CD8-positive, alpha-beta T cell (primary cell): ENCODE measurements at regions of chr1 and their contacts with region 1.

Region 1: DNA sequence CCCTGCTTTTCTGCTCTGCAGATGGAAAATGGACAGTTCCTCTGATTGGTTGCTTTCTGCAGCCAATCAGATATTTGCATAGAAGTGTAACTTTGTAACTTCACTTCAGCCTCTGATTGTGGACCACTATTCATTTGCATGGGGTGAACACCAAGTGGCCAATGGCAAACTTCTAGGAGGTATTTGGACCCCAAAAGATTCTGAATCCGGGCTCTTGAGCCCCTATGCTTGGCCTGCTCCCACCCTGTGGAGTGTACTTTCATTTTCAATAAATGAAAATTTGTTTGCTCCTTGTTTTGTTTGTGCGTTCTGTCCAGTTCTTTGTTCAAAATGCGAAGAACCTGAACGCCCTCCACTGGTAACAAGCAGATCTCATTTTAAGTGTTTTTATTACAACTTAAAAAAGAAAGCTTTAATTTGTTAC is 6.4 kb upstream of the GSTM4 start:
- DNase-seq: no peak
- ATAC-seq: no peak
- H3K4me3 ChIP-seq: no peak overlapping the region
- H3K4me3 Mint-ChIP-seq: no peak overlapping the region
- H3K27ac ChIP-seq: no peak overlapping the region
- H3K27ac Mint-ChIP-seq: no peak overlapping the region
- H3K4me1 ChIP-seq: no peaks in the 10 kb centered on the region
- H3K4me1 Mint-ChIP-seq: no peaks in the 10 kb centered on the region
- H3K27me3 ChIP-seq: no peaks in the 10 kb centered on the region
- H3K27me3 Mint-ChIP-seq: peaks cover 2% of the 10 kb centered on the region
- CTCF ChIP-seq: no peak

Region 2: GRCh38 chr1:109687616-109688499 is 38.4 kb after region 1 on chr1 and contains the start of gene GSTM1:
- CTCF ChIA-PET with region 1: interaction called, 11 read pairs
- POLR2A ChIA-PET with region 1: interaction called, 3 read pairs
- intact Hi-C with region 1: loop called in 1 of 2 experiments (anchors 5 kb)
- DNase-seq: peak in 5 of 9 experiments; percentile 46 to 92 (median 85)
- ATAC-seq: peak; percentile 98
- H3K4me3 ChIP-seq: peak within 1 kb of the TSS; percentile 60 to 63
- H3K4me3 Mint-ChIP-seq: peak within 1 kb of the TSS; percentile 87
- H3K27ac ChIP-seq: peak within 1 kb of the TSS; percentile 43 to 53
- H3K27ac Mint-ChIP-seq: peak within 1 kb of the TSS; percentile 91
- H3K4me1 ChIP-seq: no peaks in the 10 kb centered on the region
- H3K4me1 Mint-ChIP-seq: peaks cover 8% of the 10 kb centered on the region
- H3K27me3 ChIP-seq: no peaks in the 10 kb centered on the region
- H3K27me3 Mint-ChIP-seq: no peaks in the 10 kb centered on the region
- CTCF ChIP-seq: no peak
- total RNA-seq, gene GSTM1: 11.5 to 14.0 TPM

Region 3: GRCh38 chr1:110218739-110219138 is 569.2 kb after region 1 on chr1:
- CTCF ChIA-PET with region 1: no interaction called
- POLR2A ChIA-PET with region 1: no interaction called
- intact Hi-C with region 1: no loop called
- DNase-seq: no peak
- ATAC-seq: no peak
- H3K4me3 ChIP-seq: no peak overlapping the region
- H3K4me3 Mint-ChIP-seq: no peak overlapping the region
- H3K27ac ChIP-seq: no peak overlapping the region
- H3K27ac Mint-ChIP-seq: no peak overlapping the region
- H3K4me1 ChIP-seq: no peaks in the 10 kb centered on the region
- H3K4me1 Mint-ChIP-seq: peaks cover 9% of the 10 kb centered on the region
- H3K27me3 ChIP-seq: no peaks in the 10 kb centered on the region
- H3K27me3 Mint-ChIP-seq: no peaks in the 10 kb centered on the region
- CTCF ChIP-seq: no peak